ENCODE measurements at regions of chr1 and their contacts with region 1.

Region 1: GRCh38 chr1:84506002-84506728 is at the starts of genes GNG5 and SPATA1:
- DNase-seq: peak; percentile 98 to 99 (median 98)
- H3K4me3 ChIP-seq: peak within 1 kb of the TSS; percentile 49
- H3K27ac ChIP-seq: peak within 1 kb of the TSS; percentile 76 to 93
- H3K4me1 ChIP-seq: peaks cover 1% of the 10 kb centered on the region
- H3K27me3 ChIP-seq: no peaks in the 10 kb centered on the region
- CTCF ChIP-seq: no peak
- EP300 ChIP-seq: no peak
- POLR2A ChIP-seq: peak; percentile 64
- total RNA-seq, gene GNG5: 26.2 to 86.6 (median 49.1) TPM
- total RNA-seq, gene SPATA1: 0.12 to 1.9 (median 0.62) TPM in 6 of 7 donors, not detected in the other

Region 2: GRCh38 chr1:84037758-84038611 is 468.2 kb before region 1 on chr1:
- intact Hi-C with region 1: no loop called
- DNase-seq: no peak
- H3K4me3 ChIP-seq: no peak overlapping the region
- H3K27ac ChIP-seq: no peak overlapping the region
- H3K4me1 ChIP-seq: no peaks in the 10 kb centered on the region
- H3K27me3 ChIP-seq: no peaks in the 10 kb centered on the region
- CTCF ChIP-seq: no peak
- EP300 ChIP-seq: no peak
- POLR2A ChIP-seq: no peak

Region 3: DNA sequence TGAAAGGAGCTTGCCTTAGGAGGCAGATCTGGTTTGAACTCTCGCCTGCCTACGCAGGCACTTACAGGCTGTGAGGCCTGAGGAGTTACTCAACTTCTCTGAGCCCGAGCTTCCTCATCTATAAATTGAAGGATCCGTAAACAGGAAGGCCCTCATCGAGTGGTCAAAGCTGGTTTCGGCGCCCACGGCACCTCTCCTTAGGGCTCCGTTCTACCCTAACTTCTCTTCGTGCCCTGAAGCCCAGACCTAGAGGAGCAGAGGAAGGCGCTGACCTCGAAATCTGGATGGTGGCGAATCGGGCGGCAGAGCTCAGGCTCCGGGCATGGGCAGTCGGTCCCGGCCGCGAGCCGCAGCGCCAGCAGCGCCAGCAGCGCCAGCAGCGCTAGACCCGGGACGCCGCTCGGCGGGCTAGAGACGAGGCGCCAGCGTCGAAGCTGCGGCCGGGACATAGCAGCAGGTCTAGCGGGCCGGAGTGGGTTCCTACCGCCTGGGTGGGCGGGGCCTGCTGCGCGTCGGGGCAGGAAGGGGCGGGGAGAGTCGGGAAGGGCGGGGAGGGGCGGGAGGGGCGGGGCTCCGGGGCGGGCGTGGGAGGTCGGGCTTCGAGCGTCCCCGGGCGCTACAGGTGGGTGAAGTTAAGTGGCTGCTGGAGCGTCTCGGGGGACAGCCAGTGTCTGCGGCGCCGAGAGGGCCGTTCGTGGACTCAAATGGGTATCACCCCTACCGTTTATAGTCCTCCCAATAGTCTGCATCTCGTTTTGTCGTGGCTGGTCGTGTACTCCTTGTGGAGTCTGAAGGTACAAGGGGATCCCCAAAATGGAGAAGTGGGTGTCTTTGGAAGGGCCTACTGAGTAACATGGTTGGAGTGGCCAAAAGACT is 68.0 kb after region 1 on chr1 and contains the start of gene CTBS:
- intact Hi-C with region 1: loop called in 3 of 4 experiments (anchors 10 kb)
- DNase-seq: peak; percentile 86 to 91 (median 89)
- H3K4me3 ChIP-seq: peak within 1 kb of the TSS; percentile 71
- H3K27ac ChIP-seq: peak within 1 kb of the TSS; percentile 61 to 91
- H3K4me1 ChIP-seq: peaks cover 5% of the 10 kb centered on the region
- H3K27me3 ChIP-seq: no peaks in the 10 kb centered on the region
- CTCF ChIP-seq: no peak
- EP300 ChIP-seq: no peak
- POLR2A ChIP-seq: peak; percentile 72
- total RNA-seq, gene CTBS: 8.7 to 16.1 (median 11.9) TPM

Region 4: GRCh38 chr1:84869720-84870119 is 363.6 kb after region 1 on chr1:
- intact Hi-C with region 1: no loop called
- DNase-seq: no peak
- H3K4me3 ChIP-seq: no peak overlapping the region
- H3K27ac ChIP-seq: no peak overlapping the region
- H3K4me1 ChIP-seq: no peaks in the 10 kb centered on the region
- H3K27me3 ChIP-seq: no peaks in the 10 kb centered on the region
- CTCF ChIP-seq: no peak
- EP300 ChIP-seq: no peak
- POLR2A ChIP-seq: no peak